Activated CD4-positive, alpha-beta memory T cell treated with anti-CD3 and anti-CD28 coated beads for 36 hours (primary cell): ENCODE measurements at regions of chr1 and their contacts with region 1.

Region 1: DNA sequence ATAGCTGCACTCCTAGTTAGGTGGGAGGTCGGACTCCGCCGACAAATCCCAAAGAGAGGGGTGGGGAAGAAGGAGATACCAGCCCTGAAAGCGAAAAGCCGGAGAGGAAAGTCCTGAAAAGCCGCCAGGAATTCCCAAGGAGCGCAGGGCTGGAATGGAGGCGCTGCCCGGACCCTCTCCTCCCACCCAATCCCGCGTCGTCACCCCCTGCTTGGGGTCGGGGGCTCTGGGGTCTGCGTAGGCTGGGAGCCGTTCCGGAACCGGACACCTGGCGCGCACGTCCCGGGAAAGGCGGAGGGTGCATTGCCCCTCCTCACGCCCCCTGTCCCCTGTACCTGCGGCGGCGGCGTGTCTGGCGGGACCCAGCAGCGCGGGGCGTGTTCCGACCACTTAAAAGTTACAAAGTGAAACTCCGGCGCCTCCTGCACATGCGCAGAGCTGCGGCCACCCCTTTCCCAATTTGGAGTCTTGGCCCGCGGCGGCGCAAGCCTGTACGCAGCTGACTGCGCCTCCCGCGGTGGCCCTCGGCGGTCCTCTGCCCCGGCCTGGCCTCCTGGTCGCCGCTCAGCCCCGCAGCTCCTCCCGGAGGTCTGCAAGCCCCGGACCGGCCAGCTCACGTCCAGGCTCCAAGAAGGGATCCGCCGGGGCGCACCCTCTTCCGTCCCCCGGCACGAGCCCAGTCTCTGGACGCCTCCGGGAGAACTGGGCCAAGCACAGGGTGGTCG is at the start of gene TMEM63A:
- DNase-seq: peak; percentile 92
- H3K4me3 Mint-ChIP-seq: peak within 1 kb of the TSS; percentile 88
- H3K27ac Mint-ChIP-seq: peak within 1 kb of the TSS; percentile 92
- H3K4me1 Mint-ChIP-seq: peaks cover 49% of the 10 kb centered on the region
- H3K27me3 Mint-ChIP-seq: no peaks in the 10 kb centered on the region
- total RNA-seq, gene TMEM63A: 52.2 to 59.1 TPM

Region 2: GRCh38 chr1:225572422-225572821 is 309.7 kb before region 1 on chr1:
- CTCF ChIA-PET with region 1: no interaction called
- POLR2A ChIA-PET with region 1: no interaction called
- intact Hi-C with region 1: no loop called
- DNase-seq: no peak
- H3K4me3 Mint-ChIP-seq: no peak overlapping the region
- H3K27ac Mint-ChIP-seq: no peak overlapping the region
- H3K4me1 Mint-ChIP-seq: no peaks in the 10 kb centered on the region
- H3K27me3 Mint-ChIP-seq: no peaks in the 10 kb centered on the region

Region 3: DNA sequence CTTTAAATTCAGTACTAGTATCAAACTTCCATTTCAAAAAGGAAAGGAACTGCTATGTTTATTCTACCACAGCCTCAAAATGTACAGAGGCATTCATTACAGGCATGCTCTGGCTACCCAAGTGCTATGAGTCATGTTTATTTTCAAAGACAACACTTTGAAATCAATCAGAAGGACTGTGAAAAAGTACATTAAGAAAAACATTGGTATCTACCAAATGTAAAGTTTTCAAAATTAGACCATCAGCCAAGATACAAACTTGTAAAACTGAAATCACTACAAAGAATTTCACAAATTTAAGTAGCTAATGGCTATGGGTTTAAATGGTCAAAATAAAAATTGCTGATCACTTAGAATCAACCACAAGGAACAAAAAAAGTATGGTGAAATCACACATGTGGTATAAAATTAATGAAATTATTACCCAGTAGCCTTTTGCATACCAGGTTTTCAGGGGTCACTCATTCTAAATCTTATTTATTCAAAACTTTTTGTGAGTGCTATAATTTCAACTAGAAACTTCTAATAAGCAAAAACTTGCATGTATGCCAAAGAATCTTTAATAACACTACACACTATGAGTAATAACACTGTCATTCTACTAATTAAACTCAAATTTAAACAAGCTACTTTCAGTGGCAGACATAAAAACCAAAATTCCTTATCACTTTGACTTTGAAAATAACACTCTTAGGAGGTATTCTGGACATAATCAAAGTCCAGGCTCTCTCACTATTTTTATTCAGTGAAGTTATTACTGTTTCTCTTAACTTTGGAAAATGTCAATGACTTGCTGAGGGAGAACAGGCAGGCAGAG is 278.4 kb before region 1 on chr1:
- CTCF ChIA-PET with region 1: no interaction called
- POLR2A ChIA-PET with region 1: no interaction called
- intact Hi-C with region 1: no loop called
- DNase-seq: no peak
- H3K4me3 Mint-ChIP-seq: no peak overlapping the region
- H3K27ac Mint-ChIP-seq: no peak overlapping the region
- H3K4me1 Mint-ChIP-seq: no peaks in the 10 kb centered on the region
- H3K27me3 Mint-ChIP-seq: no peaks in the 10 kb centered on the region

Region 4: DNA sequence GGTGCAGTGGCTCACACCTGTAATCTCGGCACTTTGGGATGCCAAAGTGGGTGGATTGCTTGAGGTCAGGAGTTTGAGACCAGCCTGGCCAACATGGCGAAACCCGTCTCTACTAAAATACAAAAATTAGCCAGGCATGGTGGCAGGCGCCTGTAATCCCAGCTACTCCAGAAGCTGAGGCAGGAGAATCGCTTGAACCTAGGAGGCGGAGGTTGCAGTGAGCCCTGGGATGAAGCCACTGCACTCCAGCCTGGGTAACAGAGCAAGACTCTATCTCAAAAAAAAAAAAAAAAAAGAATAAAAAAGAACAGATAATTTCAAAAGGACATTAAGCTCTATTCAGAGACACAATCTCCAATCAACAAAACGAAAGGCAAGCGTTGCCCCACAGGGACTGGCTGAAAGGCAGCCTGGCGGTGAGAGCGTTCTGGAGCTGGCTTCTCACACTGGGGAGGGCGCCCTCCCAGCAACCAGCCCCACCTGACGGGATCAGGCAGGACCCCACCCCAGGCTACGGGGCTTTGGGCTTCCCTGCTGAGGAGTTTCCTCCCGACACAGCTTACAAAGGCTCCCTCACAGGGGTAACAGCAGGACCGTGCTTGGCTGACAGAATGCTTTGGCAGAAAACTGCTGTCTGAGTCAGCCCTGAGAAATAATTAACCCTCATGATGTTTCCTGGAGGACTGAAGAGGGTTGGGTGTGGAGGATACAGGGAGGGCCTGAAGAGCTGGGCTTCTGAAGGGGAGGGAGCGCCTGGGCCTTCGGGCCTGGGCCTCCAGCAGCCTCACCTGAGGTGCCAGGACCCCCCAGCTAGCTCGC is 135.6 kb before region 1 on chr1:
- CTCF ChIA-PET with region 1: no interaction called
- POLR2A ChIA-PET with region 1: no interaction called
- intact Hi-C with region 1: no loop called
- DNase-seq: no peak
- H3K4me3 Mint-ChIP-seq: no peak overlapping the region
- H3K27ac Mint-ChIP-seq: no peak overlapping the region
- H3K4me1 Mint-ChIP-seq: no peaks in the 10 kb centered on the region
- H3K27me3 Mint-ChIP-seq: peaks cover 1% of the 10 kb centered on the region

Region 5: GRCh38 chr1:225866061-225866837 is 15.9 kb before region 1 on chr1:
- CTCF ChIA-PET with region 1: interaction called, 4 read pairs
- POLR2A ChIA-PET with region 1: interaction called, 12 read pairs
- intact Hi-C with region 1: loop called (anchors 1 kb)
- DNase-seq: peak; percentile 88
- H3K4me3 Mint-ChIP-seq: peak overlapping the region; percentile 1
- H3K27ac Mint-ChIP-seq: peak overlapping the region; percentile 72
- H3K4me1 Mint-ChIP-seq: peaks cover 39% of the 10 kb centered on the region
- H3K27me3 Mint-ChIP-seq: no peaks in the 10 kb centered on the region

Region 6: GRCh38 chr1:225896937-225897549 is 14.9 kb after region 1 on chr1:
- CTCF ChIA-PET with region 1: interaction called, 13 read pairs
- POLR2A ChIA-PET with region 1: interaction called, 34 read pairs
- intact Hi-C with region 1: loop called (anchors 1 kb)
- DNase-seq: peak; percentile 83
- H3K4me3 Mint-ChIP-seq: peak overlapping the region; percentile 54
- H3K27ac Mint-ChIP-seq: peak overlapping the region; percentile 85
- H3K4me1 Mint-ChIP-seq: peaks cover 37% of the 10 kb centered on the region
- H3K27me3 Mint-ChIP-seq: no peaks in the 10 kb centered on the region